ENCODE measurements at regions of chr9 and their contacts with region 1.

Region 1: DNA sequence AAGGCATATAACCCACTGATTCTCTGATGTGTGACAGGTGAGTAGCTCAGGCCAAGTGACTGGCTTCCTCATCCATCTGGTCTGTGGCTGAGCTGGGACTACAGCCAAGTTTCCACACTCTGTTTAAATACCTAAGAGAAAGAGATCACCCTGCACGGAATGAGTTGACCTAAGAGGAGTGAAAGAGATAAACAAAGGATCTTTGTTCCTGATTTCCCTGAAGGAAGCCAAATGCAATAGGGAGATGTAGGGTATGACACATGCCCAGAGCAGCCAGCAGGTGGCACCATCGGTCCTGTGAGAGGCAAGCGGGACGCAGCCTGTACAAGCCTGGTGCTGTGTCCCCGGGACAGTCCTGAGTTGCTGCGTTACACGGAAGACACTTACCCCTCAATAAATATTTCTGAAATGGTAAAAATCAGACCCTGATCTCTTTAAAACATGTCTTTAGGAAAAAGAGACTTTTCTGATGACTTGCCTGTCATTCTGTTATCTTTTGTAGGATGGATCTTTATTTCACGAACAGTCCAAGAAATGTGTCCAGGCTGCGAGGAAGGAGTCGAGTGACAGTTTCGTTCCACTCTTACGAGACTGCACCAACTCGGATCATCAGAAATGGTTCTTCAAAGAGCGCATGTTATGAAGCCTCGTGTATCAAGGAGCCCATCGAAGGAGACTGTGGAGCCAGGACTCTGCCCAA is 41.1 kb downstream of the GALNT12 start:
- DNase-seq: peak; percentile 89
- H3K4me3 Mint-ChIP-seq: no peak overlapping the region
- H3K27ac Mint-ChIP-seq: no peak overlapping the region
- H3K4me1 Mint-ChIP-seq: peaks cover 11% of the 10 kb centered on the region
- H3K27me3 Mint-ChIP-seq: no peaks in the 10 kb centered on the region

Region 2: DNA sequence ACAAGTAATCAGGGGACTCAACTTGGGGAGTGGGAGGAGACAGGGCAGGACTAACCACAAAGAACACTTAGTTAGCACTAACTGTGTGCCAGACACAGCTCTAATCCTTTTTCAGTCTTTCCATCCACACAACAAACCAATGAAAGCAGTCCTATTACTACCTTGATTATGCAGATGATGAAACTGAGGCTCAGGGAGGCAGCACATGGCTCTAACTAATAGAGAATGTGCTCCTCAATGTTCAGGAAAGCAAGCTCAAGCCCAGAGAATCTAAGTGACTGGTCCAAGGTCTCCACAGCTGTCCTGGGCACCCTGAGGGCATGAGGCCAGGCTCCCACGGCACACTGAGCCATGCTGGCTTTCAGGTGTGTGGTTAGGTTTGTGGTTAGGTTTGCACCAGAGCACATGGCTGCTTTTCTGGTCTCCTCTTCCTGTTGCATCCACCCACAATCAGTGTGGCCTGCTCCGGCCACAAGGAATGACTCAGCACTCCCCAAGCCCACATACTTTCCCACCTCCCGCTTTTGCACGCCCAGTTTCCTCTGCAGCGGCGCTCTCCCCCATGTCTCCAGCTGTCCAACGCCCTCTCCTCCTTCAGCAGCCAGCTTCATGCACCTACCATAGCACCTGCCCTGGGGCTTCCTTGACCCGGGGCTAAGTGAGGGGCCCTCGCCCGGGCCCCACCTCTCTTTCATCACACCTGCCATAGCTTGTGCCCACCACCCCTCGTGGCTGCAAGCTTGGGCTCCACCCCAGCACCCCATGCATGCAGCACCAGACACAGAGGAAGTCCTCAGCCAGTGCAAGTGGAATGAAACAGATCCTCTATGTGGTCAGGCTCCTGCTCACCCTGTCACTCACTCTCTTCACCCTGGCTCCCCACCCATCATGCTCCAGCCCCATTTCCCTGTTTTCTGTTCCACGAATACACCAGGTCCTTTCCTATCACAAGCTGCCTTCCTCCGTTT is 272.9 kb before region 1 on chr9:
- CTCF ChIA-PET with region 1: no interaction called
- intact Hi-C with region 1: no loop called
- DNase-seq: peak; percentile 15
- H3K4me3 Mint-ChIP-seq: no peak overlapping the region
- H3K27ac Mint-ChIP-seq: no peak overlapping the region
- H3K4me1 Mint-ChIP-seq: peaks cover 10% of the 10 kb centered on the region
- H3K27me3 Mint-ChIP-seq: peaks cover 17% of the 10 kb centered on the region

Region 3: GRCh38 chr9:98823666-98824334 is 24.8 kb before region 1 on chr9:
- CTCF ChIA-PET with region 1: interaction called, 13 read pairs
- intact Hi-C with region 1: no loop called
- DNase-seq: no peak
- H3K4me3 Mint-ChIP-seq: no peak overlapping the region
- H3K27ac Mint-ChIP-seq: no peak overlapping the region
- H3K4me1 Mint-ChIP-seq: no peaks in the 10 kb centered on the region
- H3K27me3 Mint-ChIP-seq: no peaks in the 10 kb centered on the region

Region 4: GRCh38 chr9:98860871-98861293 is 12.3 kb after region 1 on chr9:
- CTCF ChIA-PET with region 1: interaction called, 13 read pairs
- intact Hi-C with region 1: no loop called
- DNase-seq: no peak
- H3K4me3 Mint-ChIP-seq: no peak overlapping the region
- H3K27ac Mint-ChIP-seq: no peak overlapping the region
- H3K4me1 Mint-ChIP-seq: no peaks in the 10 kb centered on the region
- H3K27me3 Mint-ChIP-seq: no peaks in the 10 kb centered on the region

Region 5: DNA sequence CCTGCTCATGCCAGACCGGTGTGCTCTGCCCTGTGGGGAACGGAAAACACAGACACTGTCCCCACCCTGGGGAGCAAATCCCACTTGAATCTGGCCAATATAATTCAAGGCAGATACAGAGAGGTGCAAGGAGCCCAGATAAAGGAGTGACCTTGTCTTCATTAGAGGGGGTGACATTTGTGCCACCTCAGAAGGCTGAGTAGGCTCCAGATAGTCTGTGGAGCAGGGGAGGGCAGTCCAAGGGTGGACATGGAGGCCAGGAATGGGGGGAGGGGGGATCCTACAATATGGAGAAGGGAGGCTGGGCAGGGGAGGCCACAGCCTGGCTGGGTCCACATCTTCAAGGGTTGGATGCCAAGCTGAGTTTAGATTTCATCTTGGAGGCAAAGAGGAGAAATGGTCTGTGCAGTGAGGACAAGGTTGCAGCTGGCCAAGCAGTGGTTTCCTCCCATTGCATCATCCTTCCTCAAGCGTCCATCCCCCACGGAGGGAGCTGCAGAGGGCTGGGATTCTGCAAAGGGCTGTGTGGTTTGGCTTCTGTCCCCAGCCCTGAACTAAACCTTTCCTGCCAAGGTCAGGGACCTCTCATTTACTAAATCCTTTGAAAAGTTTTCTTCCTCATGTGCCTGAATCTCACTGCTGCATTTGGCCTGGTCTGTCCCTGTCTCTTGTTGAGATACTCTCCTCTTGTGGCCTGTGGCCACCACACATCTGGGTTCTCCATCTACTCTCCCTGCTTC is 19.0 kb after region 1 on chr9:
- CTCF ChIA-PET with region 1: interaction called, 12 read pairs
- intact Hi-C with region 1: no loop called
- DNase-seq: no peak
- H3K4me3 Mint-ChIP-seq: no peak overlapping the region
- H3K27ac Mint-ChIP-seq: no peak overlapping the region
- H3K4me1 Mint-ChIP-seq: peaks cover 2% of the 10 kb centered on the region
- H3K27me3 Mint-ChIP-seq: no peaks in the 10 kb centered on the region

Region 6: DNA sequence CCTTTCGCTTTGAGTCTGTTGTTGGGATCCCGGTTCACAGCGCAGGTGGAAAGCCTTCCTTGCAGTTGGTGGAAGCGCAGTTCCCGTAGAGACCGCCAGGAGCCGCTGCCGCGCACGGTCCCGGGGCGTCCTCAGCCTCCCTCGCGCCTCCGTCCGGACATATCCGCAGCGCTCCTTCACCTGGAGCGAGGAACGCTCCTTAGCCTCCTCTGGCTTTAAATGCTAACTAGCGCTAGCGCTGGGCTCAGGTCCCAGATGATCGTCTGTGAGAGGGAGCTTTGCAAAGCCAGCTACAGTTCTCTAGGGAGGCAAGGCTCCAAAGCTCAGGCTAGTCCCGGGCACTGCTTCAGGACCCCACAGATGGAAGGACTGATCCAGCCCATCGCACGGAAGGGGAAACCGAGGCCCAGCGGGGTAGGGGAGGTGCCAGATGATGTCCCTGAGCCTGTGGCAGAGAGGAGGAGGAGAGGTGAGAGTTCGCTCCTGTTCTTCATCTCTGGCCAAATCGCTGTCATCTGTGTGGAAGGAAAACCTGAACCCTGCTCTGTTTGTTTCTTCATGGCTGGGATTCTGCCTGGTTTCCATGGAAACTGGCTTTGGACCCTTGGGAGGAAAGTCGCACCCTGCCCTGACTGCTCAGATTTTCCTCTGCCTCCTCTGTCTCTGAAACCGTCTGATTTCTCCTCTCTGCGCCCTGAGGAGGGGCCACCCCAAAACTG is 126.6 kb after region 1 on chr9:
- CTCF ChIA-PET with region 1: interaction called, 4 read pairs
- intact Hi-C with region 1: loop called (anchors 1 kb)
- DNase-seq: peak; percentile 88
- H3K4me3 Mint-ChIP-seq: peak overlapping the region; percentile 7
- H3K27ac Mint-ChIP-seq: no peak overlapping the region
- H3K4me1 Mint-ChIP-seq: no peaks in the 10 kb centered on the region
- H3K27me3 Mint-ChIP-seq: peaks cover 5% of the 10 kb centered on the region

Region 7: DNA sequence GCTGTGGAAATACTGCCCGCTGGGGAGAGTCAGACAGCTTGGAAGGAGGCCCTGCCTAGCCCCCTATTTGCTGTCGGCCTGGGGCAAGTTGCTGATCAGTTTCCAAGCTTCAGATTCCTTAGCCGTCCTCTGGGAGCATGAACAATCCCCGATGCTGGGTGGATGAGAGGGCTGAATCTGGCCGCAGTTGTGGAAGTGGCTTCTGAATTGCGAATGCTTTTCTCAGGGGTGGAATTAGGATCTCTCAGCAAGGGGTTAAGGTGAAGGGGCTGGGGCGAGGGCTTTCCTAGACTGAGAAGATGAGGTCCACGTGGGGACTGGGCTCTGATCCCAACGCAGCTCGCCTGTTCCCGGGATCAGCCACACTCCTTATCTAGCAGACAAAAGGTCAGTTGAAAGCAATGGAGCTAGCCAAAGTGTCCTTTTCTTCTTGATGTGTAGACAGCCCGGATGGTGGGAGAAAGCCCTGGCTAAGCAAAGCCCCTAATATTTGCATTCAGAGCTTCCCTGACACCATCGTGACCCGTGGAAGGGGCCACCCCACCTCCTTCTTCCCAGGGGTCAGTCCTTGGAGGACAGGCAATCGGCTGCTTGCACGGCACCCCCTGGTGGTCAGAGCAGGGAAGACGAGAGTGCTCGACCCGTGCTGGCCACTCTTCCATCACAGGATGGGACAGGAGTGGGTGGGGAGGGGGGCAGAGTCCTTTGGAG is 150.0 kb after region 1 on chr9:
- CTCF ChIA-PET with region 1: interaction called, 58 read pairs
- intact Hi-C with region 1: loop called (anchors 1 kb)
- DNase-seq: peak; percentile 69
- H3K4me3 Mint-ChIP-seq: no peak overlapping the region
- H3K27ac Mint-ChIP-seq: no peak overlapping the region
- H3K4me1 Mint-ChIP-seq: peaks cover 21% of the 10 kb centered on the region
- H3K27me3 Mint-ChIP-seq: peaks cover 4% of the 10 kb centered on the region

Measured in activated naive CD4-positive, alpha-beta T cell treated with anti-CD3 and anti-CD28 coated beads for 36 hours (primary cell).